PC-9 (cell line): ENCODE measurements at regions of chr5 and their contacts with region 1.

Region 1: DNA sequence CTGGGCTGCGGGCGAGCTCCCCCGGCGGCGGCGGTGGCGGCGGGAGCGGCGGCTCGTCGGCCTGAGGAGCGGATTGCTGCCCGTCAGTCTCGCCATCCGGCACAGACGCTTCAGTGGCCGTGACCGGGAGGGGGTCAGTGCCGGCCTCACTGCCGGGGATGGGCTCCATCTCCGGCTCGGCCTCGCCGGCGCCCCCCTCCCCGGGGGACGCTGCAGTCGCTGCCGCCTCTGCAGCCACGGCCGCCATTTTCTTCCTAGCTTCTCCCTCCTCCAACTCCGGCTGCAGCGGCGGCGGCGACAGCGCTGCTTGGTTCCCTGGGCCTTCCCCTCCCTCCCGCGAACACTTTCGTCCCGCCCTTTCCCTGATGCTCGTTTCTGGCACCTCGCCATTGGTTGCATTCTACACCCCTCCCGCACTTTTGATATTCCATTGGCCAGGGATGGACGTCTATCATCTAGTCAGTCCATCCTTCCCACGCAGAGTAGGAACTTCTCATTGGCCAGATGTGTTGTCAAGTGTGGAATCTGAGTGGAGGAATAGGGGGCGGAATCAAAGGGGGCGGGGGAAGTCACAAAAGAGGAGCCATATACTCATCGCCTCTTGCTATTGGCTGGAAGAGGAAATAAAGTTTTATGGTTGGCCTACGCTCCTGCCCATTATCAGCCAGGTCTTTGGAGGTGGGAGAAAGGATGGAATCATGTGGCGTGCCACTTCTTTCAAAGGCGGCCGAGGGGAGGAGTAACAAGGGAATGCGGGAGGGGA is at the start of gene PWWP2A:
- DNase-seq: peak; percentile 98 to 100
- H3K4me3 ChIP-seq: peak within 1 kb of the TSS; percentile 94
- H3K27ac ChIP-seq: peak within 1 kb of the TSS; percentile 37; the same call in 1 of the 2 replicates
- H3K4me1 ChIP-seq: peaks cover 14% of the 10 kb centered on the region
- H3K27me3 ChIP-seq: no peaks in the 10 kb centered on the region
- CTCF ChIP-seq: no peak
- total RNA-seq, gene PWWP2A: 19.9 and 23.2 TPM in 2 replicates

Region 2: DNA sequence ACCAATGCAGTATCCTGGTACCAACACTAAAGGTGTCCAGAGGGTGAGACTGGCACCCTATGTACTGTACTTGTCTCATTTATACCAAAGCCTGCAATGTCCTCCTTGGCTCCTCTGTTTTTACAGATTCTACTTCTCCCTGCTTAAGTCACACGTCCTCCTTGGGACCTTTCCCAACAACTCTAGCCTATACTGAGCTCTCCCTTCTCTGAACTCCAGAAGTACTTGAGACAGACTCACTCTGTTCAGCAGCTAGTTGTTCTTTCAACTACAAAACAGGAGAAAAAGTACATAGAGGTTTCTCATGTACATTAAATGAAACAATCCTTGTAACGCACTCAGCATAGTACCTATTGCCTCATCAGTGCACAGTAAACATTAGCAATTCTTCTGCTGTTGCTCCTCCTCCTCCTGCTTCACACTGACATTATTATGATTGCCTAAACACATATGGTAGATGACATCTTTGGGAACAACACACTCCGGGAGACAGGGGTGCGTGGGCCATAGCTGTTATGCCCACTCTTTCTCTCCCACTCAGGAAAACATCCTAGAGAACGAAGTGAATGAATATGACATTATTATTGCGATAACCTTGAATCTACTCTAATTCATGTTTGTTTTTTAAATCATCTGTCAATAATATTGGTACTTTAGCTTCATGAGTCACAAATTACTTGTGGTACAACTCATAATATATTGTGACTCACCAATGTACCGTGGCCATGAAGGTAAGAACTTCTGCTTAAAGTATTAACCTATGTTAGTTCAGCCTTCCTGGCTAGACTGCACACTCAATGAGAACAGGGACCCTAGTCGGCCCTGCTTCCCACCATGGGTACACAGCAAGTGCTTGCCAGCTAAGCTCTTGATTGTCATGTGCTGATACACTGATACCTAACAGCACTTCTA is 383.3 kb before region 1 on chr5:
- CTCF ChIA-PET with region 1: no interaction called
- POLR2A ChIA-PET with region 1: no interaction called
- intact Hi-C with region 1: no loop called
- DNase-seq: peak in 1 of 2 experiments; percentile 85
- H3K4me3 ChIP-seq: peak overlapping the region; percentile 22; the same call in 1 of the 2 replicates
- H3K27ac ChIP-seq: peak overlapping the region; percentile 48
- H3K4me1 ChIP-seq: peaks cover 29% of the 10 kb centered on the region
- H3K27me3 ChIP-seq: no peaks in the 10 kb centered on the region
- CTCF ChIP-seq: no peak

Region 3: DNA sequence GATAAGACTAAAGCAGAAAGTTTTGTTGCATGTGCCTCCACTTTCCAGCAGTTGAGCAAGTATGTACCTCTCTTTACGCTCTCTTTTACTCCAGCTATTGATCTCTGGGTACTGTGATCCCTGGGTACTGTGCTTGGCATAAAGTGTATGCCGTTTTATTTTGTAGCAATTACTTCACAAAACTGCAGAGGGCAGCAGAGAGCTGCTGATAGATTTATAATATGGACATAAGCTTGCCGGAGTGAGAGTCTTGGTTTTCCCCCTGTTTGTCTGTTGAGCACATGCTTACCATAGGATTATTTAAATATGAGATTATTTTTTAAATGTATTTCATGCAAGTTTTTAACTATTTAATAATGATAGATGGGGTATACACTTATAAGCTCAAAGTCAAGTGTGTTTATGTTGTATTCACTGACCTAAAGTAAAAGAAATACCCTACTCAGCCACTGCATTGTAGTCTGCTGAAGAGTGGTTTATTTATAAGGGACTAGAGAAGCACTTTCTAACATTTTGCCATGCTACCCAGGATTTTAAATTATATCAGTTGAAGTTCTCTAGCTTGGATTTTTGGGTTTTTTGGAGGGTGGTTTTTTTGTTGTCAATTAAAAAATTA is 97.4 kb before region 1 on chr5:
- CTCF ChIA-PET with region 1: no interaction called
- POLR2A ChIA-PET with region 1: interaction called, 39 read pairs
- intact Hi-C with region 1: no loop called
- DNase-seq: peak; percentile 40 to 56
- H3K4me3 ChIP-seq: no peak overlapping the region
- H3K27ac ChIP-seq: no peak overlapping the region
- H3K4me1 ChIP-seq: no peaks in the 10 kb centered on the region
- H3K27me3 ChIP-seq: no peaks in the 10 kb centered on the region
- CTCF ChIP-seq: peak; percentile 90

Region 4: DNA sequence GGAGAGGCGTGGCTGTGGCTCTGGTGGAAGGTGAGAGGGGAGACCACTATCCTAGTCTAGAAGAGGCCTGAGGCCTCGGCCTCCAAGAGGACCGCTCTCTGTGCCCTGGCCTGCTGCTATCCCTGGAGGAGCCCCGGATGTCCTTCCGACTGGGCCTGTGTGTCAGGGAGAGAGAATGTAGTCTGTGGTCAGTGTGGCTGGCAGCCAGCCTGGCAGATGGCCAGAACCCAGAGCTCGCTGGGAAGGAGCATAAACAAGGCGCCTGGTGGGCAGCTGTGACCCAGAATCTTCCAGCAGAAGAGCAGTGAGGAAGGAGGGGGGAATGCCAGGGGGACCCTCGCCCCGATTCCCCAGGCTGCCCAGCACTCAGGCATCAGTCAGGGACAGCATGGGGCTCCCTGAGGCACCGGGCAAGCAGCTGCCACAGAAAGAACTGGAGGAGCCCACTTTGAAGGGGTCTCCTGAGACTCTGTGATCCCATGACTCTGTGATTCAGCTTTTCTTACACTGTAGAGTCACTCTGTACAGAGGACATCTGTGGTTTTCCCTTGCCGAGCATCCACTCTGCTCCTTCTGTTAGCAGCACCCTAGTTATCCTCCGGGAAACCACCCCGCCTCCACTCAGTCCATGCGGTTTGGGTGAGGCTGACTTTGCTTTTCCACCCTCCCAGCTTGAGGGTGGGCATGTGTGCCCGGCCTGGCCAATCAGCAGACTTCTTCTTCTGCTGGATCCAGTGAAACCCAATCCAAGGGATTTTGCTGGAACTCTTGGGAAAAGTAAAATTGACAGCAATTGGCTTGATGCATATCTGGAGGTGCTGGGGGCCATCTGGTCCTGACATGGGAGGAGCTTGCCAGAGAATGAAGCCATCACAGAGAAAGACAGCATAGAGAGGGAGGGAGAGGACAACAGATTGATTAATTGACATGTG is 46.1 kb after region 1 on chr5:
- CTCF ChIA-PET with region 1: no interaction called
- POLR2A ChIA-PET with region 1: interaction called, 11 read pairs
- intact Hi-C with region 1: loop called (anchors 1 kb)
- DNase-seq: peak; percentile 91 to 96
- H3K4me3 ChIP-seq: peak overlapping the region; percentile 43; the same call in 1 of the 2 replicates
- H3K27ac ChIP-seq: peak overlapping the region; percentile 93
- H3K4me1 ChIP-seq: peaks cover 41% of the 10 kb centered on the region
- H3K27me3 ChIP-seq: no peaks in the 10 kb centered on the region
- CTCF ChIP-seq: no peak

Region 5: GRCh38 chr5:160199410-160199911 is 80.1 kb after region 1 on chr5:
- CTCF ChIA-PET with region 1: no interaction called
- POLR2A ChIA-PET with region 1: no interaction called
- intact Hi-C with region 1: loop called (anchors 1 kb)
- DNase-seq: peak in 1 of 2 experiments; percentile 84
- H3K4me3 ChIP-seq: peak overlapping the region; percentile 35; the same call in 1 of the 2 replicates
- H3K27ac ChIP-seq: no peak overlapping the region
- H3K4me1 ChIP-seq: no peaks in the 10 kb centered on the region
- H3K27me3 ChIP-seq: no peaks in the 10 kb centered on the region
- CTCF ChIP-seq: peak; percentile 85

Region 6: DNA sequence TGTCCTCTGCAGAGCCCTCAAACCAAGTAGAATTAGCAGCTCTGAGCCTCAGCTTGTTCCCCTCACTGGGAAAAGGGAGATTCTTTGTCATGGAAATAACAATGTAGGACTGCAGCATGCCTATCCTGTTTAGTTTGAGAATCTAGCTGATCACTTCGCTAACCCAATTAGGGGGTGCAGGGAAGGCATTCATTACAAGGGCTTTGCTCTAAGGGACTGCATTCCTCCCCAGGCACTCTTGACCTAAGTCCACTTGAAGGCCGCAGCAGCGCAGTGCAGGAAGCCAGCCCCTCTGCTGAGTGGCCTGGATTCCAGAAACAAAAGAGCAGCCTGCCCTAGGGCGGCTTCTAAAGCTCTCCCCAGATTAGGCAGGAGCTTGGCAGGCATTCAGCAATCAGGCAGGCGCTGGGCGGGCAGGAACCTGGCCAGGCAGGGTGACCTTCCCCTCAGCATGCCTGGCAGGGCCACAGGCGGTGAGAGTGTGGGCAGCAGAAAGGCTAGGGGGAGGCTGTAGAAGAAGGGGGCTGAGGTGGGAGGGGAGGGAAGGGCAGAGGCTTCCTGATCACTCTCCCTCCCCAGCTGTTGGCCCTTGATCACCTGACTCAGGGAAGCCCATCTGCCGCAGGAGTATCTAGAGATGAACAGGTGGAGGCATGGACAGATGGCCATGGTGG is 168.2 kb after region 1 on chr5:
- CTCF ChIA-PET with region 1: no interaction called
- POLR2A ChIA-PET with region 1: interaction called, 7 read pairs
- intact Hi-C with region 1: loop called (anchors 5 kb)
- DNase-seq: peak; percentile 84 to 94
- H3K4me3 ChIP-seq: no peak overlapping the region
- H3K27ac ChIP-seq: peak overlapping the region; percentile 38
- H3K4me1 ChIP-seq: peaks cover 28% of the 10 kb centered on the region
- H3K27me3 ChIP-seq: no peaks in the 10 kb centered on the region
- CTCF ChIP-seq: no peak